ENCODE measurements at regions of chr1 and their contacts with region 1.

Region 1: DNA sequence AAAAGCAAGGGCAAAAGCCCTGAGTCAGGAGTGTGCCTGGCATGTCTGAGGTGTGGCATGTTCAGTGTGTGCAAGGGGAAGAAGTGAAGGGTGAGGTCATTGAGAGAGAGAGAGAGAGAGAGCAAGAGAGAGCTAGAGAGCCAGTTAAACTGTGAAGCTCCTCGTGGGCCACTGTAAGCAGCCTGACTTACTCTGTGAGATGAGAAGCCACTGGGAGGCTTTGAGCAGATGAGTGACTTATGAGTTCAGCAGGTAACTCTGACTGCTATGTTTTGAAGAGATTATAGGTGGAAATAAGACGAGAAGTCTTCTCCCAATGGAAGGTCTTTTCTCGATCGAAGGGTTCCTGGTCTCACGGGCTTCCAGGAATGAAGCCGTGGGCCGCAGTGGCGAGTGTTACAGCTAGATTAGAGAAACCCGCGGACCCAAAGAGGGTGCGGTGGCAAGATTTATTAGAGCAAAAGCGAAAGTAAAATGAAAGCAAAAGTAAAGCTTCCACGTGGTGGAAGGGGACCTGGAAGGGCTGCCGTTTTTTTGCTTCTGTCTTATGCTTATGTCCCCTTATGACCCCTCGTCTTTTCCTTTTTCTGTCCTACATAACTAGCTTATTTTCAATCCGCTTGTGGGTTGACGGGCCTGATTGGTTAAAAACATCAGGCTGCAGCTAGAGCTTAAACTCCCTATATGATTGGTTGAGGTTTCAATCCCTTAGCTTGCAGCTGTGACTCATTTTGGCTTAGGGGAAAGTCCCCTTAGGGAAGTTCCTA is 323.1 kb upstream of the FAM78B start:
- DNase-seq: peak; percentile 83 to 95 (median 93)
- H3K4me3 ChIP-seq: peak overlapping the region; percentile 84 to 94 (median 94)
- H3K4me3 Mint-ChIP-seq: no peak overlapping the region
- H3K27ac ChIP-seq: peak overlapping the region; percentile 98 to 99
- H3K27ac Mint-ChIP-seq: no peak overlapping the region
- H3K4me1 ChIP-seq: peaks cover 11 to 20% of the 10 kb centered on the region in 2 donors
- H3K4me1 Mint-ChIP-seq: peaks cover 5% of the 10 kb centered on the region
- H3K27me3 ChIP-seq: no peaks in the 10 kb centered on the region
- H3K27me3 Mint-ChIP-seq: peaks cover 0 to 4% (median 2%) of the 10 kb centered on the region in 3 donors
- CTCF ChIP-seq: no peak

Region 2: DNA sequence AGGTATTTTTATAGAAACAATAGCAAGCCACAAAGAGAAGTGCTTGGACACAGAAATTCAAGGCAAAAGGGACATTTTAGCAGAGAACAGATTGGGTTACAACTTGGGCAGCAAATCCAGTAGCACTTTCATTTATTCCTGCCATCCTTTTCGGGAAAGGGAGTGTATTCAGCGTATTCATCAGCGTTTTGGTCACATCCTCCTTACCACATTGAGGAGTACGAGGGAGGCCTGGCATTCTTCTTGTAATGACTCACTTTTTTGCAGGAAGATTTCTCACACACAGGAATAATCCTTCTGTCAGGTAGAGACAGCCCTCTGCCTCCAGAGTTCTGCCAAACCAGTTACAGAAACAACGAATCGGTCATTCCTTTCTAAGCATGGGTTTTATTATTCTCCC is 305.0 kb before region 1 on chr1:
- intact Hi-C with region 1: no loop called
- DNase-seq: no peak
- H3K4me3 ChIP-seq: no peak overlapping the region
- H3K4me3 Mint-ChIP-seq: no peak overlapping the region
- H3K27ac ChIP-seq: no peak overlapping the region
- H3K27ac Mint-ChIP-seq: no peak overlapping the region
- H3K4me1 ChIP-seq: no peaks in the 10 kb centered on the region
- H3K4me1 Mint-ChIP-seq: no peaks in the 10 kb centered on the region
- H3K27me3 ChIP-seq: no peaks in the 10 kb centered on the region
- H3K27me3 Mint-ChIP-seq: no peaks in the 10 kb centered on the region
- CTCF ChIP-seq: no peak

Region 3: GRCh38 chr1:166410083-166410385 is 79.8 kb before region 1 on chr1:
- intact Hi-C with region 1: no loop called
- DNase-seq: no peak
- H3K4me3 ChIP-seq: no peak overlapping the region
- H3K4me3 Mint-ChIP-seq: no peak overlapping the region
- H3K27ac ChIP-seq: no peak overlapping the region
- H3K27ac Mint-ChIP-seq: no peak overlapping the region
- H3K4me1 ChIP-seq: no peaks in the 10 kb centered on the region
- H3K4me1 Mint-ChIP-seq: no peaks in the 10 kb centered on the region
- H3K27me3 ChIP-seq: no peaks in the 10 kb centered on the region
- H3K27me3 Mint-ChIP-seq: no peaks in the 10 kb centered on the region
- CTCF ChIP-seq: no peak

Region 4: GRCh38 chr1:166432655-166433054 is 57.2 kb before region 1 on chr1:
- intact Hi-C with region 1: no loop called
- DNase-seq: peak in 1 of 3 donors; percentile 6
- H3K4me3 ChIP-seq: no peak overlapping the region
- H3K4me3 Mint-ChIP-seq: no peak overlapping the region
- H3K27ac ChIP-seq: no peak overlapping the region
- H3K27ac Mint-ChIP-seq: no peak overlapping the region
- H3K4me1 ChIP-seq: no peaks in the 10 kb centered on the region
- H3K4me1 Mint-ChIP-seq: peaks cover 5% of the 10 kb centered on the region
- H3K27me3 ChIP-seq: no peaks in the 10 kb centered on the region
- H3K27me3 Mint-ChIP-seq: peaks cover 0 to 1% (median 0%) of the 10 kb centered on the region in 3 donors
- CTCF ChIP-seq: no peak

Region 5: GRCh38 chr1:166527752-166528151 is 37.9 kb after region 1 on chr1:
- intact Hi-C with region 1: loop called in 1 of 2 experiments (anchors 5 kb)
- DNase-seq: no peak
- H3K4me3 ChIP-seq: no peak overlapping the region
- H3K4me3 Mint-ChIP-seq: no peak overlapping the region
- H3K27ac ChIP-seq: no peak overlapping the region
- H3K27ac Mint-ChIP-seq: no peak overlapping the region
- H3K4me1 ChIP-seq: no peaks in the 10 kb centered on the region
- H3K4me1 Mint-ChIP-seq: no peaks in the 10 kb centered on the region
- H3K27me3 ChIP-seq: peaks cover 0 to 2% of the 10 kb centered on the region in 2 donors
- H3K27me3 Mint-ChIP-seq: peaks cover 0 to 3% (median 2%) of the 10 kb centered on the region in 3 donors
- CTCF ChIP-seq: no peak

Region 6: GRCh38 chr1:166676981-166677380 is 187.1 kb after region 1 on chr1:
- intact Hi-C with region 1: no loop called
- DNase-seq: no peak
- H3K4me3 ChIP-seq: no peak overlapping the region
- H3K4me3 Mint-ChIP-seq: no peak overlapping the region
- H3K27ac ChIP-seq: no peak overlapping the region
- H3K27ac Mint-ChIP-seq: no peak overlapping the region
- H3K4me1 ChIP-seq: no peaks in the 10 kb centered on the region
- H3K4me1 Mint-ChIP-seq: peaks cover 7% of the 10 kb centered on the region
- H3K27me3 ChIP-seq: peaks cover 0 to 2% of the 10 kb centered on the region in 2 donors
- H3K27me3 Mint-ChIP-seq: peaks cover 2 to 10% (median 4%) of the 10 kb centered on the region in 3 donors
- CTCF ChIP-seq: no peak

Measured in CD14-positive monocyte (primary cell).